ENCODE measurements at regions of chr7 and their contacts with region 1.

Region 1: GRCh38 chr7:64902806-64903721 is at the start of gene ZNF273:
- DNase-seq: peak; percentile 72 to 94 (median 90)
- ATAC-seq: peak; percentile 100
- H3K4me3 ChIP-seq: peak within 1 kb of the TSS; percentile 95
- H3K4me3 Mint-ChIP-seq: peak within 1 kb of the TSS; percentile 95 to 98 (median 95)
- H3K27ac ChIP-seq: peak within 1 kb of the TSS; percentile 83
- H3K27ac Mint-ChIP-seq: peak within 1 kb of the TSS; percentile 92 to 97 (median 95)
- H3K4me1 ChIP-seq: peaks cover 7 to 14% of the 10 kb centered on the region in 2 donors
- H3K4me1 Mint-ChIP-seq: peaks cover 36 to 55% (median 50%) of the 10 kb centered on the region in 7 donors
- H3K27me3 ChIP-seq: no peaks in the 10 kb centered on the region
- H3K27me3 Mint-ChIP-seq: no peaks in the 10 kb centered on the region
- total RNA-seq, gene ZNF273: 3.8 to 10.9 (median 7.5) TPM

Region 2: DNA sequence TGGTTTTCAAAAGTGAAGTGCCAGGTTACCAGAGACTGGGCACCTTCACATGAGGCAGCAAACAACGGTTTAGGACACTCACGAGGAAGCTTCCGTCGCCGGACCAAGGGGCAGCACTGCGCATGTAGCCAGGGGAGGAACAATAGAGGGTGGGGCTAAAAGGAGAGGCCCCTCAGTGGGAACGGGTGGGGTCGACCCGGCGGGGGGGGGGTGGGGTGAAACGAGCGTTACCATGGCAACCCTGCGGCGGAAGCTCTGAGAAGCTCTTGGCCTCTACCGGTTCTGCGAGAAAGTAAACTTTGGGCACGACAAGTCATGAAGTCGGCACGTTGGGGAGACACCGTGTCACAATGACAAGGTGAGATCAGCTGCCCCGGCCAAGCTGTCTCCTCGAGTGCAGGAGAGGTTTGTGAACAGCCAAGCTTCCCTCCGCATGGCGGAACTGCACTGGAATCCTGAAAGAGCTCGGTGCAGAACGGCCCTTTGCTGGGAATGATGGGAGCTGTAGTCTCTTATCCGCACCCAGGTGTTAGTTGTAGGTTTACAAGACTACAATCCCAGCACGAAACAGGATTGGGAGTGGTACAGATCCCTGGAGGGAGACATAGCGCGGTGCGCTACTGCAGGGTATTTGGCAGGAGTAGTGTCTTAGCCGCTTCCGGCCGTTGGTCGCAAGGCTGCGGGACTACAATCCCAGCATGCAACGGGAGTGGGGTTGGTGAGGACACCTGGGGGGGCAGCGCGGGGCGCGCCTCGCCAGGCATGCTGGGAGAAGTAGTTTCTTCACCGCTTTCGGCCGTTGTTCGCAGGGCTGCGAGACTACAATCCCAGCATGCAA is 977.2 kb before region 1 on chr7:
- CTCF ChIA-PET with region 1: no interaction called
- POLR2A ChIA-PET with region 1: interaction called, 6 read pairs
- intact Hi-C with region 1: loop called (anchors 1 kb)
- DNase-seq: peak; percentile 69 to 98 (median 95)
- ATAC-seq: peak; percentile 98
- H3K4me3 ChIP-seq: peak overlapping the region; percentile 64
- H3K4me3 Mint-ChIP-seq: peak overlapping the region; percentile 88 to 100 (median 98)
- H3K27ac ChIP-seq: peak overlapping the region; percentile 82
- H3K27ac Mint-ChIP-seq: peak overlapping the region; percentile 87 to 98 (median 95)
- H3K4me1 ChIP-seq: no peaks in the 10 kb centered on the region
- H3K4me1 Mint-ChIP-seq: peaks cover 0 to 24% (median 12%) of the 10 kb centered on the region in 7 donors
- H3K27me3 ChIP-seq: no peaks in the 10 kb centered on the region
- H3K27me3 Mint-ChIP-seq: peaks cover 0 to 4% (median 0%) of the 10 kb centered on the region in 5 donors

Region 3: GRCh38 chr7:64313740-64314491 is 589.1 kb before region 1 on chr7 and contains the start of gene ZNF736:
- CTCF ChIA-PET with region 1: no interaction called
- POLR2A ChIA-PET with region 1: interaction called, 5 read pairs
- intact Hi-C with region 1: loop called in 1 of 2 experiments (anchors 1 kb)
- DNase-seq: peak; percentile 64 to 92 (median 87)
- ATAC-seq: peak; percentile 100
- H3K4me3 ChIP-seq: peak within 1 kb of the TSS; percentile 81
- H3K4me3 Mint-ChIP-seq: peak within 1 kb of the TSS; percentile 90 to 100 (median 98)
- H3K27ac ChIP-seq: peak within 1 kb of the TSS; percentile 88
- H3K27ac Mint-ChIP-seq: peak within 1 kb of the TSS; percentile 88 to 100 (median 97)
- H3K4me1 ChIP-seq: peaks cover 8 to 12% of the 10 kb centered on the region in 2 donors
- H3K4me1 Mint-ChIP-seq: peaks cover 22 to 54% (median 39%) of the 10 kb centered on the region in 7 donors
- H3K27me3 ChIP-seq: no peaks in the 10 kb centered on the region
- H3K27me3 Mint-ChIP-seq: no peaks in the 10 kb centered on the region
- total RNA-seq, gene ZNF736: 22.8 to 54.2 (median 35.8) TPM

Region 4: DNA sequence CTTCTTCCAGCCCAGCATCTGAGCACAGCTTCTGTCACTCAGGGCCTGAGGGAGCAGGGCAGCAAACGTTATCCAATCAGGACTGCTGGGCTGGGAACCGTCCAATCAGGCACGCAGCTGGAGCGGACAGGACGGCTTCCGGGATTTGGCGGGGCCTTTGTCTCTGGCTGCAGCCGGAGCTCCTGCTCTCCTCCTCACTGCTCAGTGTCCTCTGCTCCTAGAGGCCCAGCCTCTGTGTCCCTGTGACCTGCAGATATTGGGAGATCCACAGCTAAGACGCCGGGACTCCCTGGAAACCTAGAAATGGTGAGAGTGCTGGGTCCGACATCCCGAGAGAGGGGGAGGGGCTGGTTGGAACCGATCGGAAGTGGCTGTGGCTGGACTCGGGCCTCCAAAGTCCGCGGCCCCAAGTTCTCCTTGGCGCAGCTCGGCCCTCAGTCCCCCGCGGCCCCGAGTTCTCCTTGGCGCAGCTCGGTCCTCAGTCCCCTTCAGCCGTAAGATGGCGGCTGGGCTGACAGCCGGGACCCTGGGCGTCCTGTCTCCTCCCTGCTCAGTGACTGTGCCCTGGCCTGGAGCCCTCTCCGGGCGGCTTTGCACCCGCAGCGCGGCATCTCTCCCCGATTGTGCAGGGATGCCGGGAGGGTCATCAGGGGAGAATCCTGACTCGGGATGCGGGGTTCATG is 236.9 kb before region 1 on chr7 and contains the start of gene ZNF107:
- CTCF ChIA-PET with region 1: no interaction called
- POLR2A ChIA-PET with region 1: interaction called, 4 read pairs
- intact Hi-C with region 1: loop called (anchors 1 kb)
- DNase-seq: peak; percentile 48 to 90 (median 84)
- ATAC-seq: peak; percentile 98
- H3K4me3 ChIP-seq: peak within 1 kb of the TSS; percentile 92
- H3K4me3 Mint-ChIP-seq: peak within 1 kb of the TSS; percentile 92 to 98 (median 96)
- H3K27ac ChIP-seq: peak within 1 kb of the TSS; percentile 96
- H3K27ac Mint-ChIP-seq: peak within 1 kb of the TSS; percentile 96 to 98 (median 97)
- H3K4me1 ChIP-seq: peaks cover 11 to 19% of the 10 kb centered on the region in 2 donors
- H3K4me1 Mint-ChIP-seq: peaks cover 18 to 79% (median 71%) of the 10 kb centered on the region in 7 donors
- H3K27me3 ChIP-seq: no peaks in the 10 kb centered on the region
- H3K27me3 Mint-ChIP-seq: no peaks in the 10 kb centered on the region
- total RNA-seq, gene ZNF107: 11.2 to 33.5 (median 17.3) TPM

Region 5: DNA sequence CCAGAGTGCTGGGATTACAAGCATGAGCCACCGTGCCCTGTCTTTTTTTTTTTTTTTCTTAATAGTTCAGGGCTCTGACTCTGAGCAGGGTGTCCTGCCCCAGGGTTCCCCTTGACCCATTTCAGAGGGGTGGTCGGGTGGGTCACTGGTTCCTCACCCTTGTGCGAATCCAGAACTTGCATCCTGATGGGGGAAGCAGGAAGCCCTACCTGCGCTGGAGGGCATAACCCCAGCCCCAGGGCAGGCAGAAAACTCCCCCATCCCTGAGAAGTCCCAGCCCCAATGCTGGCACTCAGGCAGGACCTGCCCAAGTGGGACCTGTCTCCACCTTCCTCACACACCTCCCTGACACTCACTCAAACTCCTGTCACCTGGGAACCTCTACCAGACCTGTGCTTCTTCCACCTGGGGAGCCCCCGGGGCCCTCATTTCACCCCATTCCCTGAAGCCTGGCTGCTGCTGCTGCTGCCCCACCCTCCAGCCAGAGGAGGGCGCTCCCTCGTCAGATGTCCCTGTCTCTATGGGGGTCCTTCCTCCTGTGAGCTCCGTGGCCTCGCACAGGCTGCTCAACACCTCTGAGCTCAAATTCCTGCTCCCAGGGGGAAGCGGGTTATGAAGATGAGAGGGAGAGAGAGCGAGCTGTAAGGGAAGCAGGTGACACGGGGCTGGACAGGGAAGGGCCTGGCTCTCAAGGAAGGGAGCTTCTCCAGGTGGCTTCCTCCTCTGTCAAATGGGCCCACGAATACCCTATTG is 15.1 kb before region 1 on chr7:
- CTCF ChIA-PET with region 1: no interaction called
- POLR2A ChIA-PET with region 1: interaction called, 3 read pairs
- intact Hi-C with region 1: loop called (anchors 1 to 2 kb)
- DNase-seq: peak in 7 of 9 donors; percentile 16 to 31 (median 25)
- ATAC-seq: peak; percentile 75
- H3K4me3 ChIP-seq: peak overlapping the region; percentile 62
- H3K4me3 Mint-ChIP-seq: peak overlapping the region; percentile 87 to 96 (median 90)
- H3K27ac ChIP-seq: no peak overlapping the region
- H3K27ac Mint-ChIP-seq: peak overlapping the region in 2 of 9 donors; percentile 32 to 40
- H3K4me1 ChIP-seq: peaks cover 0 to 10% of the 10 kb centered on the region in 2 donors
- H3K4me1 Mint-ChIP-seq: peaks cover 11 to 22% (median 14%) of the 10 kb centered on the region in 7 donors
- H3K27me3 ChIP-seq: peaks cover 0 to 14% of the 10 kb centered on the region in 2 donors
- H3K27me3 Mint-ChIP-seq: peaks cover 54 to 73% (median 60%) of the 10 kb centered on the region in 5 donors

Region 6: DNA sequence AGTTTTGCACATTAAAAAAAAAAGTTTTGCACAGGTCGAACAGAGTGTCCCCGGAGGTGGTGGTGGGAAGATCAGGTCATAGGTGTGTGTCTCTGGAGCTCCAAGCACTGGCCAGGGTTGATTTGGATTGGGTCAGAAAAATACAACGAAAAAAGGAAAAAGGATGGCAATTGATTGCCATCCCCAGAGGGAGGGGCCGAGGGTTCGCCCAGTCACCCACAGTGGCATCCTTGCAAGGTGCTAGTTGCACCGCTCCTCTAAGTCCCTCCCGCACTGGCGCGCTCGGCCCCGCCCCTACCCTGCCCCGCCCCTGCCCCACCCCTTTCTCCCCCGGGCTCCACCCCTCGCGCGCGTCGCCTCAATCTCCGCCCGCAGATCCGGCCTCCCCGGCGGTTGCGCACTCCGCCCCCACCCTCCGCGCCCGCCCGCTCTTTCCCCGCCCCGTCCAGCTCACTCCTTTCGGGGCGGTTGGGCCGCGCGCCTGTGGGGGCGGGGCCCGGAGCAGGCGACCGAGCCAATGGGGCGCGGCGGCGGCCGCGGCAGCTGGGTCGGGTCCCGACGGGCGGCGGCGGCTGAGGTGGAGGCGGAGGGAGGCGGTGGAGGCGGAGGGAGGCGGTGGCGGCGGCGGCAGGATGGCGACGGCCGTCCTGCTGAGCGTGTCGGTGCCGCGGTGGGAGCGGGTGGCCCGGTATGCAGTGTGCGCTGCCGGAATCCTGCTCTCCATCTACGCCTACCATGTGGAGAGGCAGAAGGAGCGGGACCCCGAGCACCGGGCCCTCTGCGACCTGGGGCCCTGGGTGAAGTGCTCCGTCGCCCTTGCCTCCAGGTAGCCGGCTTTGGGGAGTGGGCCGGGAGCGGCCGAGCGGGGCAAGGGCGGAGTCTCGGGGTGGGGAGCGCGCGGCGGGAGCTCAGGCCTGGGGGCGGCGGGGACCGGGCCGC is 134.9 kb after region 1 on chr7:
- CTCF ChIA-PET with region 1: no interaction called
- POLR2A ChIA-PET with region 1: interaction called, 4 read pairs
- intact Hi-C with region 1: loop called (anchors 1 to 2 kb)
- DNase-seq: peak; percentile 85 to 92 (median 88)
- ATAC-seq: peak; percentile 95
- H3K4me3 ChIP-seq: no peak overlapping the region
- H3K4me3 Mint-ChIP-seq: peak overlapping the region; percentile 77 to 87 (median 82)
- H3K27ac ChIP-seq: peak overlapping the region; percentile 80
- H3K27ac Mint-ChIP-seq: peak overlapping the region; percentile 10 to 91 (median 83)
- H3K4me1 ChIP-seq: peaks cover 0 to 8% of the 10 kb centered on the region in 2 donors
- H3K4me1 Mint-ChIP-seq: peaks cover 7 to 18% (median 15%) of the 10 kb centered on the region in 7 donors
- H3K27me3 ChIP-seq: no peaks in the 10 kb centered on the region
- H3K27me3 Mint-ChIP-seq: no peaks in the 10 kb centered on the region

Region 7: DNA sequence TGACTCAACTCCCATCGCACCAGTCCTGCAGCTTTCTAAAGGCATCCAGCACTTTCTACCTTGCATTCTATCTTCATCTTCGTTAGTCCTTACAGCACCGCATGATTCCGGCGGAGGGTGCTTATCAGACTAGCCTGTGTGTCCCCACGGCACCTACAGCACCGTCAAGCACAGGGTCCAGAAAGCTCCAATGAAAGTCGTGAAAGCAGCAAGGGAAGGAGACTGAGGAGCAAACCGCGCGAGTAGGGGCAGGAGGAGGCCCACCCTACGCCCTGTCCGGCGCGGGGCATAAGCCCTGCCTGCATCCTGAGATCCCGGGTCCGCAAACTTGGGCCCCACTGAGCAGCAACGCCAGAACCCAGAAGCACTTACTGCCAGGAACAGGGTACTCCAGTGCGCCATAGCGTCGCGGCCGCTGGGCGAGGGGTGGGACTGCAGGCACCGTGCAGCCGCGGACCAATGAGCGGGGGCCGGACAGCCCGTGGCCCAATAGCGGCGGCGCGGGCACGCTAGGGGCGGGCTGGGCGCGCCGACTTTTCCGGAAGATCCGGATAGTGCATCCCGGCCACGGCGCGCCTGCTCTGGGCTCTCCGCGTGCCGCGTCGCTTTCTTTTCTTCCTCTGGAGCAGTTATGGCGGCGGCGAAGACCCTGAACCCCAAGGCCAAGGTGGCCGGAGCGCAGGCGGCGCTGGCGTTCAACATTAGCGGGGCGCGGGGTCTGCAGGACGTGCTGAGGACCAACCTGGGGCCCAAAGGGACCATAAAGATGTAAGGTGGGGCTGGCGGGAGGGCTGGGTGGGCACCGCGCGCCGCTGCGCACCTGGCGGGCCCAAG is 847.7 kb after region 1 on chr7:
- CTCF ChIA-PET with region 1: no interaction called
- POLR2A ChIA-PET with region 1: no interaction called
- intact Hi-C with region 1: loop called in 1 of 2 experiments (anchors 2 kb)
- DNase-seq: peak; percentile 76 to 91 (median 80)
- ATAC-seq: peak; percentile 99
- H3K4me3 ChIP-seq: peak overlapping the region; percentile 97
- H3K4me3 Mint-ChIP-seq: peak overlapping the region; percentile 90 to 100 (median 98)
- H3K27ac ChIP-seq: peak overlapping the region; percentile 85
- H3K27ac Mint-ChIP-seq: peak overlapping the region; percentile 75 to 95 (median 87)
- H3K4me1 ChIP-seq: peaks cover 6 to 7% of the 10 kb centered on the region in 2 donors
- H3K4me1 Mint-ChIP-seq: peaks cover 0 to 35% (median 20%) of the 10 kb centered on the region in 7 donors
- H3K27me3 ChIP-seq: no peaks in the 10 kb centered on the region
- H3K27me3 Mint-ChIP-seq: no peaks in the 10 kb centered on the region